ENCODE measurements at regions of chr14 and their contacts with region 1.

Region 1: DNA sequence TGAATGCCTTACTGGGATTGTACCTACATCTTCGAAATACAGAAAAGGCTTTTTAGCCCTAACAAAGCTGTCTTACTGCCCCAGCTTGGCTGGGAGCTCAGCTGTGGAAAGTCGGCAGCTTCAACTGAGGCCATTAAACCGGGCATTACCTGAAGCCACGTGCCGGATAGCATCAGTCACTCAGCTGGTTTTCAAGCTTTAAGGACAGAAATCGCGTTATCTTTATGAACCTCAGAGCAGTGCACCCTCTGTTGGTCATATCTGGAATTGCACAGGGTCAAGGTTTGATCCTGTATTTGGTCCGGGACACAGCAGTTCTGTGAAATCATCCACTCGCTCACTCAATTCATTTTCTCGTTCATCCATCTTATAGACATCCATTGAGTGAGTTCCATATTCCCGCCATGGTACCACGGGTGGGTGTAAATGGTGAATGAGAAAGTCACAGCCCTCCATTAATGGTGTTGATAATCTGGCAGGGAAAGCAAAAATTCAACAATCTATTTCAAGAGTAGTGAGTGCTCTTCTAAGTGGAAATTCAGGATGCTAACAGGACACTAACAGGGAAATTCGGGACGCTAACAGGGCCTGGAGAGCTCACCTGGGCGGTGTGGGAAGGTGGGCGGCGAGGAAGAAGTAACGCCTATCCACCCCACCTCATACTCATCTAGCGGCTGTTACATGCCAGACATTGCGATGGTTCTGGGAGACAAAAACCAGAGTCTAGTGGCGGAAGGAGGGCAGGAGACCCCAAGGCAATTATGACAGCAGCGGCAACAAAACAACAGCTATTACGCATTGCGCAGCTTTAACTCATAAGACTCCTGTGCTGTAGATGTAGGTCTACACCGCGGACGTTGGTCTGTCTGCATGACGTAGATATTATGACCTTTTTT is 60.6 kb upstream of the TCL1A start:
- DNase-seq: no peak
- H3K4me3 ChIP-seq: no peak overlapping the region
- H3K27me3 ChIP-seq: no peaks in the 10 kb centered on the region
- CTCF ChIP-seq: peak; percentile 85

Region 2: GRCh38 chr14:95561001-95561412 is 213.5 kb before region 1 on chr14:
- CTCF ChIA-PET with region 1: interaction called, 58 read pairs
- POLR2A ChIA-PET with region 1: no interaction called
- DNase-seq: peak; percentile 17
- H3K4me3 ChIP-seq: no peak overlapping the region
- H3K27me3 ChIP-seq: no peaks in the 10 kb centered on the region
- CTCF ChIP-seq: peak; percentile 89

Region 3: DNA sequence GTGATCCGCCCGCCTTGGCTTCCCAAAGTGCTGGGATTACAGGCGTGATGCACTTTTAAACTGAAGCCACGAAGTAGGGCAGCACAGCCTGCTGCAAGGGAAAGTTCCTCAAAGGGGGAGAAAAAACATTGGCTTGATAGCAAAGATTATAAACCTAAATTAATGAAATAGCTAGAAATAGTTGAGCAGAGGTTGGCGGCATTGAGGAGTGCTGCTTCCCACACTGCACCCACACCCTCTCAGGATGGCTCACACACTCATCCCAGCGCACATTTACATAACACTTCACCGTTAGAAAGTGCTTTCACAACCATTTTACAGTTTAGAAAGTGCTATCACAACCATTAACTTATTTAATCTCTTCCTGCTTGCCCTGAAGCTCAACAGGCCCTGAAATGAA is 16.2 kb before region 1 on chr14:
- CTCF ChIA-PET with region 1: interaction called, 13 read pairs
- POLR2A ChIA-PET with region 1: no interaction called
- DNase-seq: no peak
- H3K4me3 ChIP-seq: no peak overlapping the region
- H3K27me3 ChIP-seq: no peaks in the 10 kb centered on the region
- CTCF ChIP-seq: no peak

Region 4: GRCh38 chr14:95796788-95797187 is 22.3 kb after region 1 on chr14:
- CTCF ChIA-PET with region 1: interaction called, 10 read pairs
- POLR2A ChIA-PET with region 1: no interaction called
- DNase-seq: no peak
- H3K4me3 ChIP-seq: no peak overlapping the region
- H3K27me3 ChIP-seq: no peaks in the 10 kb centered on the region
- CTCF ChIP-seq: no peak

Region 5: GRCh38 chr14:95814363-95815225 is 40.1 kb after region 1 on chr14:
- CTCF ChIA-PET with region 1: no interaction called
- POLR2A ChIA-PET with region 1: no interaction called
- DNase-seq: no peak
- H3K4me3 ChIP-seq: no peak overlapping the region
- H3K27me3 ChIP-seq: no peaks in the 10 kb centered on the region
- CTCF ChIP-seq: no peak

Region 6: GRCh38 chr14:95922080-95922479 is 147.6 kb after region 1 on chr14:
- CTCF ChIA-PET with region 1: no interaction called
- POLR2A ChIA-PET with region 1: no interaction called
- DNase-seq: no peak
- H3K4me3 ChIP-seq: no peak overlapping the region
- H3K27me3 ChIP-seq: no peaks in the 10 kb centered on the region
- CTCF ChIP-seq: no peak

Region 7: GRCh38 chr14:95993768-95994592 is 219.5 kb after region 1 on chr14:
- CTCF ChIA-PET with region 1: interaction called, 13 read pairs
- POLR2A ChIA-PET with region 1: no interaction called
- DNase-seq: no peak
- H3K4me3 ChIP-seq: no peak overlapping the region
- H3K27me3 ChIP-seq: no peaks in the 10 kb centered on the region
- CTCF ChIP-seq: peak; percentile 78